B cell (primary cell): ENCODE measurements at regions of chr11 and their contacts with region 1.

Region 1: DNA sequence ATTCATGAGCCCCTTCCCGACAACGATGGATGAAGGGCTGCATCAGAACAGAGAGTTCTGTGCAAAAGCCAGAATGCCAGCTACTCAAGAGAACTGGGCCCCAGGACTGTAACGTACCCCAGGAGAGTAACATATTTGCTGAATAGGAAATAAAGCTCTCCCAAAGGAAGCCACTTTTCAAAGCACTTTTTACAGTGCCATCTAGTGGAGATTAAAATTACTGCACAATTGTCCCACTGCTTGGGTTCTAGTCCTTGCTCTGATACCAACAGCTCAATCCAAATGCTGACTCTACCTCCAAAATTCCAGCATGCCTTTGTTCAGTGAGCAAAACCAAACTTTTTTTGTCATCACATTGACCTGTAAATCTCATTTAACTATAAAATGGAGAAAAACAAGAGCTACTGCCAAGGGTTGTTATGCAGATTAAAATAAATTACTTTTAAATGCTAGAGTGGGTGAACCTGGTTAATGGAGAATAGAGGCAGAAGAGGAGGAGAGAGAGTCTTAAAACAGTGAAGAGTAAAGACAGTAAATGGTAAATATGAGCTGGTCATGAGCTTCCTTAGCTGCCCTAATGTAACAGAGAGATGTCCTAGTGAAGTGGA is 87.6 kb upstream of the FSHB start:
- DNase-seq: peak; percentile 32
- ATAC-seq: no peak
- H3K4me3 ChIP-seq: no peak overlapping the region
- H3K4me3 Mint-ChIP-seq: no peak overlapping the region
- H3K27ac ChIP-seq: no peak overlapping the region
- H3K27ac Mint-ChIP-seq: no peak overlapping the region
- H3K4me1 ChIP-seq: no peaks in the 10 kb centered on the region
- H3K4me1 Mint-ChIP-seq: no peaks in the 10 kb centered on the region
- H3K27me3 ChIP-seq: no peaks in the 10 kb centered on the region
- H3K27me3 Mint-ChIP-seq: no peaks in the 10 kb centered on the region
- CTCF ChIP-seq: peak; percentile 88

Region 2: DNA sequence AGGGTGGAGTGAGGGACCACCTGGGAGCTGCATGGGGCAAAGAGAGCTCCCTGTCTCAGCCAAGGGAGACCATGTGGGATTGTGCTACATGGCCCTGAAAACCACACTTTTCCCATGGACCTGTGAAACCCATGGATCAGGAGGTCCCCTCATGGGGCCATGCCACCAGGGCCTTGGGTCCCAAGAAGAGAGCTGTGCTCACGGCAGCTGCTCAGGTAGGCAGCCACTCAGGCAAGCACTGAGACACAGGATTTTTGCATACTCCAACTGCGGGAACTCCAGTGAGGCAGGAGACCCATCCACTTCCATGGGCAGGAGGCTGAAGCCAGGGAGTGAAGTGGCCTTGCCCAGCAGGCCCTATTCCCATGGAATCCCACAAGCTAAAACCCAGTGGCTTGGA is 316.3 kb before region 1 on chr11:
- CTCF ChIA-PET with region 1: no interaction called
- POLR2A ChIA-PET with region 1: no interaction called
- intact Hi-C with region 1: no loop called
- DNase-seq: no peak
- ATAC-seq: no peak
- H3K4me3 ChIP-seq: no peak overlapping the region
- H3K4me3 Mint-ChIP-seq: no peak overlapping the region
- H3K27ac ChIP-seq: no peak overlapping the region
- H3K27ac Mint-ChIP-seq: no peak overlapping the region
- H3K4me1 ChIP-seq: no peaks in the 10 kb centered on the region
- H3K4me1 Mint-ChIP-seq: no peaks in the 10 kb centered on the region
- H3K27me3 ChIP-seq: no peaks in the 10 kb centered on the region
- H3K27me3 Mint-ChIP-seq: no peaks in the 10 kb centered on the region
- CTCF ChIP-seq: no peak

Region 3: GRCh38 chr11:30062103-30062502 is 81.1 kb before region 1 on chr11:
- CTCF ChIA-PET with region 1: no interaction called
- POLR2A ChIA-PET with region 1: no interaction called
- intact Hi-C with region 1: no loop called
- DNase-seq: no peak
- ATAC-seq: no peak
- H3K4me3 ChIP-seq: no peak overlapping the region
- H3K4me3 Mint-ChIP-seq: no peak overlapping the region
- H3K27ac ChIP-seq: no peak overlapping the region
- H3K27ac Mint-ChIP-seq: no peak overlapping the region
- H3K4me1 ChIP-seq: no peaks in the 10 kb centered on the region
- H3K4me1 Mint-ChIP-seq: no peaks in the 10 kb centered on the region
- H3K27me3 ChIP-seq: no peaks in the 10 kb centered on the region
- H3K27me3 Mint-ChIP-seq: no peaks in the 10 kb centered on the region
- CTCF ChIP-seq: no peak

Region 4: DNA sequence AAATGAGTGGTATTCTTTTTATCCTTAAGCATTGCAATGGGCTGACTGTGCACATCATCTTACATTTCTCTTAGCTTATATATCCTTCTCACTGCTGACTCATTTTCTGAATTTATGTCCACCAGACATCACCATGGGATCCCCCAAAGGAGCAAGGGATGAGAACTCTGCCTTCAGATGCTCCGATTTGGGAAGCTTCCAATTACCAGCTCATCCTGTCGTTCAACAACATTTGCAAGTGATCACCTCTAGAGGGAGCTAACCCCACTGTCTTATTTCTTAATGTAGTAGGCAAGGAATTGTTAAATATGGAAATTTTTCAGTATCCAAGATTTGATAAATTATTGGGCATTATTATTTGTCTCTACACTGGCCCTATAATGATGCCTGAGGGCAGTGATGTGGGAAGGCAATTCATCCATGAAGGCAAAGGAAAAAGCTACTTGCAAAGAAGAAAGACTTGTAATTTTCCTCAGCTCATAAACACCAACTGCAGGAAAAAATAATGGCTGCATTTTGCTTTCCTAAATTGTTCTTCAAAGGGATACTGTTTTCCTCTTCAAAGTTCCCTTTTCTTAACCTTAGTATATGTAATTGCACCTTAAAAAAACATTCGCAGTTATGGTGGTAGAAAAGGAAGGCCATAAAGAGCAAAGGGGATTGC is 14.8 kb before region 1 on chr11:
- CTCF ChIA-PET with region 1: interaction called, 56 read pairs
- POLR2A ChIA-PET with region 1: no interaction called
- intact Hi-C with region 1: no loop called
- DNase-seq: peak; percentile 3
- ATAC-seq: no peak
- H3K4me3 ChIP-seq: no peak overlapping the region
- H3K4me3 Mint-ChIP-seq: no peak overlapping the region
- H3K27ac ChIP-seq: no peak overlapping the region
- H3K27ac Mint-ChIP-seq: no peak overlapping the region
- H3K4me1 ChIP-seq: no peaks in the 10 kb centered on the region
- H3K4me1 Mint-ChIP-seq: no peaks in the 10 kb centered on the region
- H3K27me3 ChIP-seq: no peaks in the 10 kb centered on the region
- H3K27me3 Mint-ChIP-seq: peaks cover 10% of the 10 kb centered on the region
- CTCF ChIP-seq: peak; percentile 58

Region 5: GRCh38 chr11:30155428-30155827 is 12.2 kb after region 1 on chr11:
- CTCF ChIA-PET with region 1: interaction called, 35 read pairs
- POLR2A ChIA-PET with region 1: no interaction called
- intact Hi-C with region 1: no loop called
- DNase-seq: no peak
- ATAC-seq: no peak
- H3K4me3 ChIP-seq: no peak overlapping the region
- H3K4me3 Mint-ChIP-seq: no peak overlapping the region
- H3K27ac ChIP-seq: no peak overlapping the region
- H3K27ac Mint-ChIP-seq: no peak overlapping the region
- H3K4me1 ChIP-seq: no peaks in the 10 kb centered on the region
- H3K4me1 Mint-ChIP-seq: no peaks in the 10 kb centered on the region
- H3K27me3 ChIP-seq: peaks cover 0 to 4% (median 0%) of the 10 kb centered on the region in 4 experiments
- H3K27me3 Mint-ChIP-seq: peaks cover 12% of the 10 kb centered on the region
- CTCF ChIP-seq: no peak